CD4-positive, alpha-beta T cell (primary cell): ENCODE measurements at regions of chr2 and their contacts with region 1.

Region 1: DNA sequence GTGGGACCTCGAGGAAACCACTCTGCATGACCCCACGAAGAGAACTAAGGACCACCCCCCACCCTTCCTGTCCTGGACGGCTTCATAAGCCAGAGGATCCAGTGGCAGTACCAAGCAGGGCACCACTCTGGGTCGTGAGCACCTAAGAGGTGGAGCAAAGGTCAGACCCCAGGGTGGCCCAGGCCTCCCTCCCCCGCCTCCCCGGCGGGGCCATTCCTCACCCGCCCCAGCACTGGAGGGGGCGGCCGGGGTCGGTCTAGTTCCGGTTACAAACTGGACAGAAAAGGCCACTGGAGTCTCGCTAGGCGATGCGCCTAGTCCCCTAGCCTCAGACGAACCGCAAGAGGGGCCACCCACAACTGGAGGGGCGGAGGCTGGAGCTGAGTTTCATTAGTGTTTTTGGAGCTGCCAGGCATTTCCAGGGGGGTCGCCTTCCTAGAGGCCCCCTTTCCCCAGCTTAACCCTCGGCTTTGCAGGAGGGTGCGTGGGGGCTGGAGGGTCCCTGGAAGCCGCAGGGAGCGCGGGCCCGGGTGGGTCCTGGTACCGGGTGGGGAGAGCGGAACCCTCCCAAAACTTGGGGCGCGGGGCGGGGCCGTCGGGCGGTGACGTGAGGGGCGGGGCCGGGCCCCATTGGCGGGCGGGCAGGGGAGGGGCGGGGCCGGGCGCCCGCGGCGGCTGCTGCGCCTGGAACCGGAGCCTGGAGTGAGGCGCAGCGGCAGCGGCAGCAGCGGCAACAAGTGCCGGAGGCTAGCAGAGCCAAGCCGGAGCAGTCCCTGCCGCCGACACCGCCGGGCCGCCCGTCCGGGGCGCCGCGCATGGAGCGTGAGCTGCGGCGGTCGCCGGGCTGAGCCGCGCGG is at the start of gene B3GNT2:
- DNase-seq: peak; percentile 72 to 94 (median 82)
- ATAC-seq: peak; percentile 76
- H3K4me3 ChIP-seq: peak within 1 kb of the TSS; percentile 98
- H3K4me3 Mint-ChIP-seq: peak within 1 kb of the TSS; percentile 95
- H3K27ac ChIP-seq: peak within 1 kb of the TSS; percentile 75 to 88
- H3K27ac Mint-ChIP-seq: peak within 1 kb of the TSS; percentile 78
- H3K4me1 ChIP-seq: peaks cover 32% of the 10 kb centered on the region
- H3K4me1 Mint-ChIP-seq: peaks cover 28% of the 10 kb centered on the region
- H3K27me3 ChIP-seq: no peaks in the 10 kb centered on the region
- H3K27me3 Mint-ChIP-seq: no peaks in the 10 kb centered on the region
- CTCF ChIP-seq: no peak
- total RNA-seq, gene B3GNT2: 47.7 TPM

Region 2: GRCh38 chr2:61065715-61066709 is 1129.6 kb before region 1 on chr2 and contains the start of gene SANBR:
- CTCF ChIA-PET with region 1: no interaction called
- POLR2A ChIA-PET with region 1: no interaction called
- intact Hi-C with region 1: loop called in 1 of 2 experiments (anchors 10 kb)
- DNase-seq: peak; percentile 59 to 93 (median 78)
- ATAC-seq: peak; percentile 97
- H3K4me3 ChIP-seq: peak within 1 kb of the TSS; percentile 63
- H3K4me3 Mint-ChIP-seq: peak within 1 kb of the TSS; percentile 99
- H3K27ac ChIP-seq: peak within 1 kb of the TSS in 1 of 2 donors; percentile 30
- H3K27ac Mint-ChIP-seq: peak within 1 kb of the TSS; percentile 68
- H3K4me1 ChIP-seq: peaks cover 11% of the 10 kb centered on the region
- H3K4me1 Mint-ChIP-seq: peaks cover 7% of the 10 kb centered on the region
- H3K27me3 ChIP-seq: no peaks in the 10 kb centered on the region
- H3K27me3 Mint-ChIP-seq: no peaks in the 10 kb centered on the region
- CTCF ChIP-seq: no peak
- total RNA-seq, gene SANBR: 1.1 to 1.3 TPM

Region 3: DNA sequence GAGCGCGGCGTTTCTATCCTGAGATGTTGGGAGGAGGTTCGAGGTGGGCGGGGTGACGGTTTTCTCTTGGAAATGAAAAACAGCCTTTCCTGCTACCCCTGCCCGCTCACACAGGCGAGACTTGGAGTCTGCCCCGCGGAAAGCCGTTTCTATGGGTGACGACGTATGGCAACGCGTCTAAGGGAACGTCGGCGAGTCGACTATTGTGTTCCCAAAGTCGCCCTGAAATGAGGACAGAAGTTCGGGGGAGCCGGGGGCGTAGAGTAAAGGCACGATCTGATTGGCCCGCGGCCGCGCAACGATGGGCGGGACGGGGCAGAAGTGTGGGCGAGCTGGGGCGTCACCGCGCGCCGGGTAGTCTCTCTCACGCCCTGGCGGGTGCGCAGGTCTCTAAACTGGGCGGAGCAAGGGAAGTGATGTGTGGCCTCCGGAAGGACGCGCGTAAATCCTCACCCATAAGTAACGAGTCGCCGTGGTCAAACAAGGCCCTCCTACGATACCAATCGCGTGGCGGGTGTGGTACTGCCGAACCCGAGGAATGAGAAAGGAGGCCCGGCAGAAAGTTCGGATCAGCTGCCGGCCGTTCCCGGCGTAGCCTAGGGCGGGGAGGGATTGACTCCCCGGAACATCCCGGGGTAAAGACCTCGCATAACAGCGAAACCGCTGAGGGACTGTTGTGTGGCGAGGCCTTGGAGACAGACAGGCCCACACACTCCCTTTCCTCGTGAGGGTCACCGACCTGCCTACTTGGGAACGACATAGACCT is 431.4 kb before region 1 on chr2:
- CTCF ChIA-PET with region 1: no interaction called
- POLR2A ChIA-PET with region 1: no interaction called
- intact Hi-C with region 1: loop called in 1 of 2 experiments (anchors 10 kb)
- DNase-seq: peak; percentile 85 to 99 (median 93)
- ATAC-seq: peak; percentile 96
- H3K4me3 ChIP-seq: peak overlapping the region; percentile 89
- H3K4me3 Mint-ChIP-seq: peak overlapping the region; percentile 96
- H3K27ac ChIP-seq: peak overlapping the region; percentile 92 to 98
- H3K27ac Mint-ChIP-seq: peak overlapping the region; percentile 96
- H3K4me1 ChIP-seq: peaks cover 13% of the 10 kb centered on the region
- H3K4me1 Mint-ChIP-seq: peaks cover 22% of the 10 kb centered on the region
- H3K27me3 ChIP-seq: no peaks in the 10 kb centered on the region
- H3K27me3 Mint-ChIP-seq: no peaks in the 10 kb centered on the region
- CTCF ChIP-seq: no peak

Region 4: GRCh38 chr2:61905372-61906185 is 290.1 kb before region 1 on chr2 and contains the start of gene COMMD1:
- CTCF ChIA-PET with region 1: no interaction called
- POLR2A ChIA-PET with region 1: no interaction called
- intact Hi-C with region 1: loop called (anchors 5 to 10 kb)
- DNase-seq: peak; percentile 60 to 89 (median 74)
- ATAC-seq: peak; percentile 97
- H3K4me3 ChIP-seq: peak within 1 kb of the TSS; percentile 92
- H3K4me3 Mint-ChIP-seq: peak within 1 kb of the TSS; percentile 96
- H3K27ac ChIP-seq: peak within 1 kb of the TSS; percentile 23 to 38
- H3K27ac Mint-ChIP-seq: peak within 1 kb of the TSS; percentile 88
- H3K4me1 ChIP-seq: peaks cover 10% of the 10 kb centered on the region
- H3K4me1 Mint-ChIP-seq: peaks cover 22% of the 10 kb centered on the region
- H3K27me3 ChIP-seq: no peaks in the 10 kb centered on the region
- H3K27me3 Mint-ChIP-seq: no peaks in the 10 kb centered on the region
- CTCF ChIP-seq: no peak
- total RNA-seq, gene COMMD1: 11.5 to 13.2 TPM

Region 5: GRCh38 chr2:62306751-62307468 is 111.3 kb after region 1 on chr2:
- CTCF ChIA-PET with region 1: no interaction called
- POLR2A ChIA-PET with region 1: interaction called, 3 read pairs
- intact Hi-C with region 1: loop called in 1 of 2 experiments (anchors 10 kb)
- DNase-seq: peak in 5 of 14 experiments; percentile 5 to 73 (median 67)
- ATAC-seq: peak; percentile 18
- H3K4me3 ChIP-seq: no peak overlapping the region
- H3K4me3 Mint-ChIP-seq: no peak overlapping the region
- H3K27ac ChIP-seq: peak overlapping the region in 1 of 2 donors; percentile 65
- H3K27ac Mint-ChIP-seq: peak overlapping the region; percentile 75
- H3K4me1 ChIP-seq: peaks cover 71% of the 10 kb centered on the region
- H3K4me1 Mint-ChIP-seq: peaks cover 88% of the 10 kb centered on the region
- H3K27me3 ChIP-seq: no peaks in the 10 kb centered on the region
- H3K27me3 Mint-ChIP-seq: no peaks in the 10 kb centered on the region
- CTCF ChIP-seq: no peak

Region 6: GRCh38 chr2:62586981-62587380 is 391.3 kb after region 1 on chr2:
- CTCF ChIA-PET with region 1: no interaction called
- POLR2A ChIA-PET with region 1: no interaction called
- intact Hi-C with region 1: no loop called
- DNase-seq: no peak
- ATAC-seq: no peak
- H3K4me3 ChIP-seq: no peak overlapping the region
- H3K4me3 Mint-ChIP-seq: no peak overlapping the region
- H3K27ac ChIP-seq: no peak overlapping the region
- H3K27ac Mint-ChIP-seq: no peak overlapping the region
- H3K4me1 ChIP-seq: no peaks in the 10 kb centered on the region
- H3K4me1 Mint-ChIP-seq: no peaks in the 10 kb centered on the region
- H3K27me3 ChIP-seq: peaks cover 0 to 4% of the 10 kb centered on the region in 2 experiments
- H3K27me3 Mint-ChIP-seq: peaks cover 9% of the 10 kb centered on the region
- CTCF ChIP-seq: no peak